ENCODE measurements at regions of chr2 and their contacts with region 1.

Region 1: DNA sequence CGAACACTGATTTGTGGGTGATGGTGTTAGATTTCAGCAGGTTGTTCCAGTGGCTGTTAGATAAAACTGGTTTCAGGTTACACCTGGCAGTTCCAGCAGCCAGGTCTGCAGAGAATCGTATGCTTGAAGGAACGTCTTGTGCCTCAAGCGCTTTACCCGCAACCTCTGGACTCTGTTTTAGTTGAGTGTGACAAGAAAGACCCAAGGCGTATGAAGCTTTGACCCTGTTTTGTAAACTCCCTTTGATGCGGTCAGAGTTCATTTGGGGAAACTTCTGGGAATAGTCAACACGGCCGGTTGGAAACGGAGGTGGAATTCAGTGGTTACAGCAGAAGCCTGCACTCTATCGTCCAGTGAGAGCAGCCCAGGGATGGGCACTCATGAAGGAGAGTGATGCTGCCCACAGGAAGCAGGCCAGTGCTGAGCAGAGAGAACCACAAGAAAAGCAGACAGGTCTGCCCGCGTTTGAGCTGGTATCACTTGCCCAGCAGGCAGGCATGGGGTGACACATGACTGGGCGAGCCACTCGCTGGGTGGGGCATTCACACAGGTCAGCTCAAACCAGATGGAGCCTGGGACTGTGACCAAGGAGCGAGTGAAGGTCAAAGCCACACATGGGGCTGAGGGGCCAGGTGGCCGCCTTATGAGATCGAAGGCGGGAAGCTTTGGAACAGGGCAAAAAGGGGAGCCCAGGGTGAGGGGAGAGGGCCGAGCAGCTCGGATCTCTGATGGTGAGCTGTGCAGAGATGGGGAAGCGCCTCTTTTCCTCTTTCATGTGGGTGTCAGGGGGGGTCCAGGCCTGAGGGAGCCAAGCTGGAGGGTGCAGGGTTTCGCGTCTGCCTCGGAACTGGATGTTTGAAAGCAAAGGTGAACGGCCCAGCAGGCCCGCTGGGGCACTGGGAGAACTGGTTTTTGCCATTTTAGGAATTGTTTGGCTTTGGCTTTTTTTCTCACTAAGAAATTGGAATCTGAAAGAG is 99.7 kb upstream of the MBOAT2 start:
- DNase-seq: no peak
- ATAC-seq: no peak

Region 2: GRCh38 chr2:8598295-8599165 is 504.6 kb before region 1 on chr2:
- intact Hi-C with region 1: no loop called
- DNase-seq: peak; percentile 63
- ATAC-seq: peak in 1 of 2 donors; percentile 86

Region 3: GRCh38 chr2:8872821-8873432 is 230.2 kb before region 1 on chr2:
- intact Hi-C with region 1: loop called in 1 of 2 experiments (anchors 10 kb)
- DNase-seq: no peak
- ATAC-seq: no peak

Region 4: DNA sequence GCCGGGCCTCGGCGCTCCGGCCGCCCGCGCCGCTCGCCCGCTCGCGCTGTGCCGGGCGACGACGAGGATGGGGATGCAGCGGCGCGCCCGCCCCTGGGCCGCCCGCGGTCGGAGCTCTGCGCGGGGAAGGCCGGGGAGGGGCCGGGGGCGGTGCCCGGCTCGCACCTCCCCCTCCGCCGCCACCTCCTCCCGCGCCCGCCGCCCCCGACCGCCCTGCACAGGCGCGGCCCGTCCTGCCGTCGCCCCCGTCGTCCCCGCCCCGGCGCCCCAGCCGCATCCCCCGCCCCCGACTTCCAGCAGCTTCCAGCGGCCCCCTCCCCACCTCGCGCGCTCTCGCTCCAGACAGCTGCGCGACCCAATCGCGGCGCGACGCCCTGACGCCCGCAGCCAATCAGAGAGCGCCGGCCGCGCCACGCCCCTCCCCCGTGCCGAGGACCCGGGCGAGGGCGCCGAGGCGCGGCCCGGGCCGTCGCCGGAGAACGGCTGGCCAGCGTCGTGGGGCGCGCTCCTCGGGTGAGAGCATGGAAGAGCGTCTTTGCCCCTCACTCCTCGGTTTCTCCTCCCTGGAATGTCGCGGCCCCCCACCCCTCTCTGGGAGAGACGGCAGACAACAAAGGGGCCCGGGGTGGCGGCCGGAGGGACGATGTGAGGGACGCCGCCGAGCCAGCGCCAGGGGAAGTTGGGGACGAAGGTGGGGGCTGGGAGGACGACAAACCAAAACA is 99.4 kb before region 1 on chr2 and contains the start of gene MBOAT2:
- intact Hi-C with region 1: loop called in 1 of 2 experiments (anchors 10 kb)
- DNase-seq: peak; percentile 90
- ATAC-seq: peak; percentile 98 to 99
- total RNA-seq, gene MBOAT2: 6.7 to 8.8 TPM

Region 5: DNA sequence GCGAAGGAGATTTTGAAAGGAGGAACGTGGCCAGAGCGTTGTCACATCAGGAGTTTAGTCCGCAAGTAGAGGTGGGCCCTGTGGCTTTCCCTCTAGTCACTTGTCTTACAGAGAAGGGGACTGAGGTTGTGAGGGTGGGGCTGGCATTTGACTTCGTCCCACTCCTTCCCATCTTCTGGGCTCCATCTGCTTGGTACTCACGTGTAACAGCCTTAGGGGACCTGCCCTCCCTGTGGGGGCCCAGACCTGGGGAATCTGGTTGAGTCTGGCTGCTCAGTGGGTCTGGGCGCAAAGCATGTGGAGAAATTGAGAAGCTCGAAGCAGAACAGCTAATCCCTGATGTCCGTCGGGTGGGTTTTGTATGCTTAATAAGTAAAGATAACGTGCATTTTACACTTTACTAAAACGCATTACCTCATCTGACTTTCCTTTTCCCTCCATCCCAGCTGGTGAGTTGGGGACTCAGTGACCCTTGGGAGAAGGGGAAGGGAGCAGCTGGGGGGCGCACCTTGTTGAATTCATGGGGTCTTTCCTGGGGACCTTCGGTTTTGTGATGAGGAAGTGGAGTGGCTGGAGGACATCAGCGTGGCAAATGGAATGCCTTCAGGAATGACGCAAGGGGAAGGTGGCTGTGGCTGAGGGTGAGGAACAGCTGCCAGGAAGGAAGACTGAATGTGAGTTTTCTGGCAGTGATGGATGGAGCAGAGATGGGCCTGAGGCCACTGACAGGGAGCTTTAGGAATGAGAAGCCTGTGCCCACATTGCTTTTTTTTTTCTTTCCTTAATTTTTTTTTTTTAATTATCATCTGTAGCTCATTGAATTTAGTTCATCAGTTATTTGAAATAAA is 148.2 kb after region 1 on chr2:
- intact Hi-C with region 1: no loop called
- DNase-seq: peak; percentile 58
- ATAC-seq: peak; percentile 76